CD8-positive, alpha-beta T cell (primary cell): ENCODE measurements at regions of chr19 and their contacts with region 1.

Region 1: DNA sequence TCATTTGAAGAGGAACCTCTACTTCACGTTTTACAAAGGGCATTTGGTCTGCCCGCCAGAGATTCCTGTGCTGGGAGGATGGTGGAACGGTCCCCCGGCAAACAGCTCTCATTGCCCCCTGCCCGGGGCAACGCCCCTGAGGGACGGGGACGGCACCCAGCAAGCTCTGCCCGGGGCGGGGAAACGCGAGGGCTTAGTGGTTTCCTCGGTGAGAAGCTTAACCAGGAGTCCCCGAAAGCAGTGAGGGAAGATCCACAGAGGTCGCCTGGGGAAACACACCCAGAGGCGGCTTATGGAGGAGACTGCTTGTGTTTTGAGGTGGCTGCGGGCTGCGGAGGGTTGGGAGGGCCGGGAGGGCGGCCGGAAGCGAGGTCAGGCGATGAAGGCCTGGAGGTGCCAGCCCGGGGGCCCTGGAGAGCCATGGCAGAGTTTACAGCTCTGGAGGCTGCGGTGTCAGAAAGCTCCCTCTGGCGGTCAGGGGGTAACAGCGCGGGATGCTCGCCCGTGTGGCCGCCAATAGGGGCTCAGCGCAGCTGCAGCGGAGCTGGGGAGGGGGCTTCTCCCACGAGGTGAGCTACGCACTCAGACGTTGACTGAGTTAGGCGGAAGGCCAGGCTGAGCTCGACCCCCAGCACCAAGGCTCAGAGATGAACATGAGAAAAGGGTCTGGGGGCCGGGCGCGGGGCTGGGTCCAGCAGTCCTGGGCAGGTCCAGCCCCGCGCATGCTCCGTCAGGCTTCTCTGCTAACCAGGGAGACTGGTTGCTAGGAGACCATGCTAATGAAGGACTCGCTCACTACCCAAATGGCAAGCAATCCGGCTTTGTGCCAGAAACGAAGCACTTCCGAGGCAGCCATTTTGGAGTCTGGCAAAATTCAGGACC is 652 bp upstream of the TPGS1 start:
- DNase-seq: peak; percentile 83 to 98 (median 94)
- ATAC-seq: peak; percentile 49
- H3K4me3 ChIP-seq: peak overlapping the region; percentile 69 to 80
- H3K4me3 Mint-ChIP-seq: peak overlapping the region; percentile 96
- H3K27ac ChIP-seq: peak overlapping the region; percentile 87 to 98
- H3K27ac Mint-ChIP-seq: peak overlapping the region; percentile 98
- H3K4me1 ChIP-seq: peaks cover 42% of the 10 kb centered on the region
- H3K4me1 Mint-ChIP-seq: peaks cover 41% of the 10 kb centered on the region
- H3K27me3 ChIP-seq: no peaks in the 10 kb centered on the region
- H3K27me3 Mint-ChIP-seq: no peaks in the 10 kb centered on the region
- CTCF ChIP-seq: peak; percentile 93

Region 2: DNA sequence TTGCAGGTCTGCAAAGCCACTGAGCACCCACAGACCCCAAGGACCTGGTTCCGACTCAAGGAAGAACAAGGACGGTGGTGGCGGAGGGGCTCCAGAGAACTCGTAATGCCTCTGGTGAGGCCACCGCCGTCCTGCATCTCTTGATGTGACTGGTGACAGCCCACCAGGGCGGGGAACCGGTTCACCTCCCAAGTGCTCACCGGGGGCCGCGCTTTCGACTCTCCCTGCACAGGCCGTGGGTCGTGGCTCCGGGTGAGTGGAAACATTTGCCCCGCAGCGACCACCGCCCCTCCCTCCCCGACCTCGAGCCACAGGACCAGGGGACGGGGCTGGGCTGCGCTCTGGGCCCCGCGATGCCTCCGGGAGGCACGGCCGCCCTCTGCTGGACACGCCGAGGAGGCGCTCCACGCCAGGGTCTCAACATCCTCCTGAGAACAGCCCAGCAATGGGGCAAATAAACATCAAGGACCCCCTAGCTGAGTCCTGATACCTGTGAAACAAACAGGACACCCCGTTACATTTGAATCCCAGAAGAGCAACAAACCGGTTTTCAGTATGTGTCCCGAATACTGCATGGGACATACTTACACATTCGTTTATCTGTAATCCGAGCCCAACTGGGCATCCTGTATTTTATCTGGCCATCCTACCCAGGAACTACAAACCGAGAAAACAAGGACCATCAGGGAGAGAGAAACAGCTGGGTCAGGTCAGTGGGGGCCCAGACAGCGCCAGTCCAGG is 211.5 kb before region 1 on chr19:
- CTCF ChIA-PET with region 1: interaction called, 7 read pairs
- POLR2A ChIA-PET with region 1: no interaction called
- intact Hi-C with region 1: loop called in 1 of 2 experiments (anchors 5 kb)
- DNase-seq: peak in 8 of 9 experiments; percentile 23 to 60 (median 50)
- ATAC-seq: peak; percentile 77
- H3K4me3 ChIP-seq: no peak overlapping the region
- H3K4me3 Mint-ChIP-seq: peak overlapping the region; percentile 22
- H3K27ac ChIP-seq: no peak overlapping the region
- H3K27ac Mint-ChIP-seq: no peak overlapping the region
- H3K4me1 ChIP-seq: peaks cover 15% of the 10 kb centered on the region
- H3K4me1 Mint-ChIP-seq: peaks cover 10% of the 10 kb centered on the region
- H3K27me3 ChIP-seq: peaks cover 12 to 19% of the 10 kb centered on the region in 2 experiments
- H3K27me3 Mint-ChIP-seq: peaks cover 31% of the 10 kb centered on the region
- CTCF ChIP-seq: peak; percentile 77

Region 3: DNA sequence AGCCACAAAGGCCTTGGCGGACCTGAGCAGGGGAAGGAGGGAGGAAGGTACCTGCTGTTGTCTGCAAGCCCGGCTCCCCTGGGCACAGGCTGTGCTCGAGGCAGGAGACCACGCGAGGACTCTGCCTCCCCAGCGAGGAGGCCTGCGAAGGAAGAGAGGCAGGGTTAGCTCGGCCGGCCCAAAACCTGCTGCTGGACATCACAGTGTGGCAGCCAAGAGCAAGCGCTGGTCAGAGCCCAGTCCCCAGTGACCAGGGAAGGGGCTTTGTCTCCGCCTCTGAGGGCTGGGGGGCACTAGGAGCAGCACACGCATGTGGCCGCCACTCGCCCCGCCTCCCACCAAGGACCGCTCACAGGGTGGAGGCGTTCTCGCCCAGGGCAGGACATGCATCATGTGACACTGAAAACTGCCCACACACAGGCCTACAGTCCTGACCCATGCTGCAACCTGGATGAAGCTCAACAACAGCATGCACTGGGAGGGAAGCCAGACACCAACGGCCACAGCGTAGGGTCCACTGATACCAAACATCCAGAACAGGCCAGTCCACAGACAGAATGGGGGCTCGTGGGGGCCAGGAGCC is 170.5 kb before region 1 on chr19:
- CTCF ChIA-PET with region 1: no interaction called
- POLR2A ChIA-PET with region 1: no interaction called
- intact Hi-C with region 1: no loop called
- DNase-seq: no peak
- ATAC-seq: no peak
- H3K4me3 ChIP-seq: no peak overlapping the region
- H3K4me3 Mint-ChIP-seq: no peak overlapping the region
- H3K27ac ChIP-seq: no peak overlapping the region
- H3K27ac Mint-ChIP-seq: no peak overlapping the region
- H3K4me1 ChIP-seq: no peaks in the 10 kb centered on the region
- H3K4me1 Mint-ChIP-seq: peaks cover 34% of the 10 kb centered on the region
- H3K27me3 ChIP-seq: no peaks in the 10 kb centered on the region
- H3K27me3 Mint-ChIP-seq: no peaks in the 10 kb centered on the region
- CTCF ChIP-seq: no peak

Region 4: GRCh38 chr19:488505-489417 is 17.9 kb before region 1 on chr19:
- CTCF ChIA-PET with region 1: interaction called, 20 read pairs
- POLR2A ChIA-PET with region 1: interaction called, 22 read pairs
- intact Hi-C with region 1: loop called (anchors 1 kb)
- DNase-seq: peak; percentile 85 to 96 (median 93)
- ATAC-seq: peak; percentile 93
- H3K4me3 ChIP-seq: peak overlapping the region; percentile 55 to 84
- H3K4me3 Mint-ChIP-seq: peak overlapping the region; percentile 83
- H3K27ac ChIP-seq: peak overlapping the region; percentile 74 to 80
- H3K27ac Mint-ChIP-seq: peak overlapping the region; percentile 85
- H3K4me1 ChIP-seq: peaks cover 6% of the 10 kb centered on the region
- H3K4me1 Mint-ChIP-seq: peaks cover 11% of the 10 kb centered on the region
- H3K27me3 ChIP-seq: no peaks in the 10 kb centered on the region
- H3K27me3 Mint-ChIP-seq: peaks cover 8% of the 10 kb centered on the region
- CTCF ChIP-seq: no peak

Region 5: GRCh38 chr19:518603-519231 is 12.1 kb after region 1 on chr19:
- CTCF ChIA-PET with region 1: interaction called, 31 read pairs
- POLR2A ChIA-PET with region 1: interaction called, 5 read pairs
- intact Hi-C with region 1: no loop called
- DNase-seq: peak; percentile 46 to 83 (median 78)
- ATAC-seq: peak; percentile 98
- H3K4me3 ChIP-seq: no peak overlapping the region
- H3K4me3 Mint-ChIP-seq: peak overlapping the region; percentile 29
- H3K27ac ChIP-seq: no peak overlapping the region
- H3K27ac Mint-ChIP-seq: no peak overlapping the region
- H3K4me1 ChIP-seq: peaks cover 11% of the 10 kb centered on the region
- H3K4me1 Mint-ChIP-seq: peaks cover 13% of the 10 kb centered on the region
- H3K27me3 ChIP-seq: no peaks in the 10 kb centered on the region
- H3K27me3 Mint-ChIP-seq: no peaks in the 10 kb centered on the region
- CTCF ChIP-seq: peak; percentile 46

Region 6: GRCh38 chr19:543910-544608 is 37.4 kb after region 1 on chr19 and contains the start of gene GZMM:
- CTCF ChIA-PET with region 1: interaction called, 9 read pairs
- POLR2A ChIA-PET with region 1: interaction called, 4 read pairs
- intact Hi-C with region 1: loop called in 1 of 2 experiments (anchors 1 kb)
- DNase-seq: peak; percentile 66 to 95 (median 84)
- ATAC-seq: peak; percentile 94
- H3K4me3 ChIP-seq: peak within 1 kb of the TSS; percentile 94 to 99
- H3K4me3 Mint-ChIP-seq: peak within 1 kb of the TSS; percentile 92
- H3K27ac ChIP-seq: peak within 1 kb of the TSS; percentile 90 to 91
- H3K27ac Mint-ChIP-seq: peak within 1 kb of the TSS; percentile 94
- H3K4me1 ChIP-seq: peaks cover 20% of the 10 kb centered on the region
- H3K4me1 Mint-ChIP-seq: peaks cover 24% of the 10 kb centered on the region
- H3K27me3 ChIP-seq: no peaks in the 10 kb centered on the region
- H3K27me3 Mint-ChIP-seq: no peaks in the 10 kb centered on the region
- CTCF ChIP-seq: no peak
- total RNA-seq, gene GZMM: 117 to 119 TPM

Region 7: DNA sequence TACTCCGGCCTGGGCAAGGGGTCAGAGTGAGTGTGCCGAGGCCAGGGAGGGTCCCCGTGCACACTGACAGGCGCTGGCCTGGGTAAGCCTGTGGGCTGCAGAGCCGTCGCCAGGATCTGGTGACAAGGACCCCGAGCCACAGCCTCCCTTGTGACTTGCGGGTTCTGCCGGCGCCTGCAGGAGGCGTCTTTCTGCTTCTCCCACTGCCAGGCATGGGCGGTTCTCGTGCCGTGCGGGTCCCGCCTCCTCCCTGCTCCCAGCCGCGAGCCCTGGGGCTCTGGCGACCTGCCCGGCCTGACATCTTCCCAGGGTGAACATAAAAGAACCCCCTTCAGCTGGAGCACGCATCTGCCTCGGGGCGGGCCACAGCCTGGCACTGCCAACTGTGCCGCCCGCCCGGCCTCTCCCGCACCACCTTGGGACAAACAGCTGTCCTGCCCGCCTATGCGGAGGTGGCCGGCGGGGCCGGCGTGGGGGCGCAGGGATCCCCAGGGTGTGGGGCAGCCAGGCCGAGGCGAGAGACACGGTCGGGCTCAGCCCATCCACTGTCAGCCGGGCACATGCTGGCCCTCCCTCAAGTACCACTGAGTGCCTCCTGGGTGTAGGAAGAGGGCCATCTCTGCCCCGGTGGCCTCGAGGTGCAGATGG is 81.6 kb after region 1 on chr19:
- CTCF ChIA-PET with region 1: interaction called, 11 read pairs
- POLR2A ChIA-PET with region 1: interaction called, 3 read pairs
- intact Hi-C with region 1: no loop called
- DNase-seq: peak in 8 of 9 experiments; percentile 36 to 81 (median 68)
- ATAC-seq: peak; percentile 65
- H3K4me3 ChIP-seq: no peak overlapping the region
- H3K4me3 Mint-ChIP-seq: peak overlapping the region; percentile 37
- H3K27ac ChIP-seq: no peak overlapping the region
- H3K27ac Mint-ChIP-seq: no peak overlapping the region
- H3K4me1 ChIP-seq: peaks cover 26% of the 10 kb centered on the region
- H3K4me1 Mint-ChIP-seq: peaks cover 16% of the 10 kb centered on the region
- H3K27me3 ChIP-seq: peaks cover 11 to 38% of the 10 kb centered on the region in 2 experiments
- H3K27me3 Mint-ChIP-seq: peaks cover 15% of the 10 kb centered on the region
- CTCF ChIP-seq: peak; percentile 61

Region 8: DNA sequence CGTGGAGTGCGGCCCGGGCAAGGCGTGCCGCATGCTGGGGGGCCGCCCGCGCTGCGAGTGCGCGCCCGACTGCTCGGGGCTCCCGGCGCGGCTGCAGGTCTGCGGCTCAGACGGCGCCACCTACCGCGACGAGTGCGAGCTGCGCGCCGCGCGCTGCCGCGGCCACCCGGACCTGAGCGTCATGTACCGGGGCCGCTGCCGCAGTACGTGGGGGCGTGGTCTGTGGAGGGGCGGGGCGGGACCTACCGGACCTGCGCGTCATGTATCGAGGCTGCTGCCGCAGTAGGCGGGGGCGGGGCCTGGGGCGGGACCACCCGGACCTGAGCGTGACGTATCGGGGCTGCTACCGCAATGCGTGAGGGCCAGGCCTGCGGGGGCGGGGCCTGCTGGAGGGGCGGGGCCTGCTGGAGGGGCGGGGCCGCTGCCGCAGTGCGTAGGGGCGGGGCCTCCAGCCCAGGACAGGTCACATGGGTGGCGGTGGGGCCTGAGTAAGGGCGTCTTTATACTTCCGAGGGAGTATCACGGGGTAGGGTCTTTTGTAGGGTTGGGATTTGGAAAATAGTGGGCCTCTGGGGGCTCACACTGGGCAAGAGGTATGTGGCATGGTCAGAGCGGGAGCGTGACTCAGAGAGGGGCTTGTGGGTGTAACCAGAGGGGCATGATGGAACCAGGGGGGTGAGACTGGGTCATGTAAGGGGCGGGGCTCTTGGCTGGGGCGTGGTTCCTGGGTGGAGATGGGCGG is 173.8 kb after region 1 on chr19:
- CTCF ChIA-PET with region 1: interaction called, 3 read pairs
- POLR2A ChIA-PET with region 1: no interaction called
- intact Hi-C with region 1: loop called in 1 of 2 experiments (anchors 1 kb)
- DNase-seq: peak; percentile 99 to 100 (median 100)
- ATAC-seq: peak; percentile 79
- H3K4me3 ChIP-seq: peak overlapping the region; percentile 59 to 94
- H3K4me3 Mint-ChIP-seq: peak overlapping the region; percentile 91
- H3K27ac ChIP-seq: peak overlapping the region; percentile 73 to 88
- H3K27ac Mint-ChIP-seq: peak overlapping the region; percentile 97
- H3K4me1 ChIP-seq: peaks cover 20% of the 10 kb centered on the region
- H3K4me1 Mint-ChIP-seq: peaks cover 8% of the 10 kb centered on the region
- H3K27me3 ChIP-seq: peaks cover 0 to 16% of the 10 kb centered on the region in 2 experiments
- H3K27me3 Mint-ChIP-seq: peaks cover 4% of the 10 kb centered on the region
- CTCF ChIP-seq: peak; percentile 37